ENCODE measurements at regions of chr12 and their contacts with region 1.

Region 1: GRCh38 chr12:12813120-12814101 is at the start of gene DDX47:
- DNase-seq: peak; percentile 92
- CTCF ChIP-seq: peak; percentile 98

Region 2: DNA sequence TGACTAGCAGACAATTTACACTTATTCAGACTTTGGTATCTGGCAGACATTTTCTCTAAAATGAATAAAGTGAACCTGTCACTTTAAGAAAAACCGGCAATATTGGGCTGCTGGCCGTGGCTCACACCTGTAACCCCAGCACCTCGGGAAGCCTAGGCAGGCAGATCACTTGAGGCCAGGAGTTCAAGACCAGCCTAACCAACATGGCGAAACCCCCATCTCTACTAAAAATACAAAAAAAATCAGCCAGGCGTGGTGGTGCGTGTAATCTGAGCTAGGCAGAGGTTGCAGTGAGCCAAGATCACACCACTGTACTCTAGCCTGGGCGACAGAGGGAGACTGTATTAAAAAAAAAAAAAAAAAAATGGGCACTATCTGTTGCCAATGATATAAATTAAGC is 262.3 kb before region 1 on chr12:
- CTCF ChIA-PET with region 1: no interaction called
- POLR2A ChIA-PET with region 1: no interaction called
- DNase-seq: no peak
- CTCF ChIP-seq: no peak

Region 3: GRCh38 chr12:12792421-12792820 is 21.0 kb before region 1 on chr12:
- CTCF ChIA-PET with region 1: interaction called, 37 read pairs
- POLR2A ChIA-PET with region 1: no interaction called
- DNase-seq: no peak
- CTCF ChIP-seq: no peak

Region 4: DNA sequence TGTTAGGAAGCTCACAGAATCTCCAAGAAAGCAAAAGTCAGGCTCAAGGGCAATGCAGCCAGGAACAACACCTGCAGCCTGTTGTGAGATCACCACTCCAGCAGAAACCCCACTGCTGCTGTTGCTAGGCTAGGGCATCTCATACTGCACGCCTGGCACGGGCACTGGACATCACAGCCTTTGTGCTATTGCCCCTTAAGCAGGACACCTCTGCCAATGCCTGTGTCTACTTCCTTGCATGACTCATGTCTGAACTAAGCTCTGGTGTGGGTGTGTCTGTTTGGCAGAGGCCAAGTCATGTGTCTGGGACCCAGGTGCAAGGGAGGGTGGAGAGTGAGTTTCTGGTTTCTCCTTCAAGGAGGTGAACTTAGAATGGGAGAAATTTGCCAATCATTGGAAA is 10.2 kb before region 1 on chr12:
- CTCF ChIA-PET with region 1: interaction called, 38 read pairs
- POLR2A ChIA-PET with region 1: no interaction called
- DNase-seq: peak; percentile 68
- CTCF ChIP-seq: no peak

Region 5: GRCh38 chr12:12881151-12881894 is 67.9 kb after region 1 on chr12:
- CTCF ChIA-PET with region 1: no interaction called
- POLR2A ChIA-PET with region 1: no interaction called
- DNase-seq: no peak
- CTCF ChIP-seq: no peak

Measured in GM10248 (cell line).